ENCODE measurements at regions of chr22 and their contacts with region 1.

Region 1: DNA sequence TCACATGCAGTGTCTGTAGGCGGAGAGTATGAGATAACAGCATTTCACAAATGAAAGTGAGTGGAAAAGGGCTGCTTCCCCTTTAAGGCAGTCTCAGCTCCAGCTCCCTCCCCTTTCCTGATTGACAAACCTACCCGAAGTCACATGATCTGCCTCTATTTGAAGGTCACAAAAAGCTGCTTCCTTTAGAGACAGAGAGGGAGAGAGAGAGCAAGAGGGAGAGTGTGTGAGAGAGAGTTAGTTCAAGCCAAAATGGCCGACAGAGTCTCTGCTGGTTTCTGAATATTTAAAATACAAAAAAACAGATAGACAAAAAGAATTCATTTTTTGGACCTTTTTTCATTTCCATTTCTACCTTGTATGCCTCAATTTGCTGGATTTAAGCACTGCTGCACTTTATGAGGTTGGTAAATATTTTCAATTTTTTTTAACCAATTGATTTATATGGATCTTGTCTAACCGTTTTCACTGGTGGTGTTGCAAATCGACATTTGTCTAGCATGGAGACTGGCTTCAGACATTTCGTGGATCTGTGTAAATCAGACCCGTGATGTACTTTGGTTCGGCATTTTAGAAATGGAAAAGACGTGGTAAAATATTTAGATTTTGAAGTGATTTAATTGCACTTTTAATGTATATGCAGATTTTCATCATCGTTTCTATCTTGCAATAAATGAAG is at the start of gene TNRC6B:
- DNase-seq: peak; percentile 79
- H3K4me3 Mint-ChIP-seq: peak within 1 kb of the TSS; percentile 87
- H3K27ac Mint-ChIP-seq: peak within 1 kb of the TSS; percentile 92
- H3K4me1 Mint-ChIP-seq: peaks cover 56% of the 10 kb centered on the region
- H3K27me3 Mint-ChIP-seq: no peaks in the 10 kb centered on the region
- total RNA-seq, gene TNRC6B: 26.2 and 30.9 TPM in 2 replicates

Region 2: GRCh38 chr22:39520054-39520891 is 657.6 kb before region 1 on chr22 and contains the start of gene ATF4:
- intact Hi-C with region 1: loop called (anchors 1 kb)
- DNase-seq: peak; percentile 96
- H3K4me3 Mint-ChIP-seq: peak within 1 kb of the TSS; percentile 97
- H3K27ac Mint-ChIP-seq: peak within 1 kb of the TSS; percentile 100
- H3K4me1 Mint-ChIP-seq: peaks cover 60% of the 10 kb centered on the region
- H3K27me3 Mint-ChIP-seq: peaks cover 2% of the 10 kb centered on the region
- total RNA-seq, gene ATF4: 387 and 390 TPM in 2 replicates

Region 3: GRCh38 chr22:40044102-40044869 is 133.6 kb before region 1 on chr22:
- intact Hi-C with region 1: loop called (anchors 1 kb)
- DNase-seq: peak; percentile 98
- H3K4me3 Mint-ChIP-seq: peak overlapping the region; percentile 90
- H3K27ac Mint-ChIP-seq: peak overlapping the region; percentile 100
- H3K4me1 Mint-ChIP-seq: peaks cover 17% of the 10 kb centered on the region
- H3K27me3 Mint-ChIP-seq: peaks cover 3% of the 10 kb centered on the region

Region 4: DNA sequence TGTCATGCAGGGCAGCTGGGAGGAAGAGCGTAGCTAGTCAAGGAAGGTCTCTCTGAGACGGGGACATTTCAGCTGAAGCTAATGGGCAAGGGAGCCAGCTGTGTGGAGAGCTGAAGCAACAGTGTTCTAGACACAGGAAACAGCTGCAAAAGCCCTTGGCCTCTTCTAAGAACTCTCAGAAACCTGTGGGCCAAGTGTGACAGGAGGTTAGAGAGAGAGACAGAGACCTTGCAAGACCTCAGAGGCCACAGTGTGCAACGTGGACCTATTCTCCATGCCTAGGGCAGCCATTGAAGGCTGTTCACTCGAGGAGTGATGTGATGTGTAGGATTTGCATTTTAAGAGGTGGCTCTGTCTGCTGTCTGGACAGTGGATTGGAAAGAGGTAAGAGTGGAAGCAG is 48.9 kb before region 1 on chr22:
- intact Hi-C with region 1: loop called (anchors 2 kb)
- DNase-seq: peak; percentile 31
- H3K4me3 Mint-ChIP-seq: peak overlapping the region; percentile 55
- H3K27ac Mint-ChIP-seq: peak overlapping the region; percentile 82
- H3K4me1 Mint-ChIP-seq: peaks cover 32% of the 10 kb centered on the region
- H3K27me3 Mint-ChIP-seq: no peaks in the 10 kb centered on the region

Region 5: GRCh38 chr22:40240686-40241085 is 62.8 kb after region 1 on chr22:
- intact Hi-C with region 1: loop called (anchors 1 kb)
- DNase-seq: peak; percentile 11
- H3K4me3 Mint-ChIP-seq: no peak overlapping the region
- H3K27ac Mint-ChIP-seq: peak overlapping the region; percentile 74
- H3K4me1 Mint-ChIP-seq: peaks cover 63% of the 10 kb centered on the region
- H3K27me3 Mint-ChIP-seq: no peaks in the 10 kb centered on the region

Region 6: GRCh38 chr22:40289991-40290459 is 112.1 kb after region 1 on chr22:
- intact Hi-C with region 1: loop called (anchors 1 kb)
- DNase-seq: peak; percentile 61
- H3K4me3 Mint-ChIP-seq: peak overlapping the region; percentile 65
- H3K27ac Mint-ChIP-seq: peak overlapping the region; percentile 95
- H3K4me1 Mint-ChIP-seq: peaks cover 55% of the 10 kb centered on the region
- H3K27me3 Mint-ChIP-seq: no peaks in the 10 kb centered on the region

Region 7: GRCh38 chr22:40636380-40637182 is 458.7 kb after region 1 on chr22 and contains the start of gene MRTFA:
- intact Hi-C with region 1: loop called (anchors 1 kb)
- DNase-seq: peak; percentile 100
- H3K4me3 Mint-ChIP-seq: peak within 1 kb of the TSS; percentile 94
- H3K27ac Mint-ChIP-seq: peak within 1 kb of the TSS; percentile 94
- H3K4me1 Mint-ChIP-seq: peaks cover 27% of the 10 kb centered on the region
- H3K27me3 Mint-ChIP-seq: no peaks in the 10 kb centered on the region
- total RNA-seq, gene MRTFA: 47.4 and 47.8 TPM in 2 replicates

Measured in activated T-helper 1 cell treated with anti-CD3 and anti-CD28 coated beads, Interleukin-12 subunit alpha, Interleukin-12 subunit beta, Interleukin-2, Interleukin-4 antibody, amounts not matched to agents 30 ng/mL and 10 ng/mL and 1 ng/mL, durations not matched to agents 14 hours and 24 hours and 36 hours (primary cell).